Common myeloid progenitor, CD34-positive (primary cell): ENCODE measurements at regions of chr19 and their contacts with region 1.

Region 1: GRCh38 chr19:47745010-47745901 is at the start of gene NOP53:
- DNase-seq: peak; percentile 96 to 99 (median 96)
- H3K4me3 ChIP-seq: peak within 1 kb of the TSS; percentile 76 to 88 (median 82)
- H3K27ac ChIP-seq: peak within 1 kb of the TSS; percentile 92 to 97
- H3K4me1 ChIP-seq: peaks cover 3 to 42% (median 34%) of the 10 kb centered on the region in 4 experiments
- H3K27me3 ChIP-seq: no peaks in the 10 kb centered on the region

Region 2: DNA sequence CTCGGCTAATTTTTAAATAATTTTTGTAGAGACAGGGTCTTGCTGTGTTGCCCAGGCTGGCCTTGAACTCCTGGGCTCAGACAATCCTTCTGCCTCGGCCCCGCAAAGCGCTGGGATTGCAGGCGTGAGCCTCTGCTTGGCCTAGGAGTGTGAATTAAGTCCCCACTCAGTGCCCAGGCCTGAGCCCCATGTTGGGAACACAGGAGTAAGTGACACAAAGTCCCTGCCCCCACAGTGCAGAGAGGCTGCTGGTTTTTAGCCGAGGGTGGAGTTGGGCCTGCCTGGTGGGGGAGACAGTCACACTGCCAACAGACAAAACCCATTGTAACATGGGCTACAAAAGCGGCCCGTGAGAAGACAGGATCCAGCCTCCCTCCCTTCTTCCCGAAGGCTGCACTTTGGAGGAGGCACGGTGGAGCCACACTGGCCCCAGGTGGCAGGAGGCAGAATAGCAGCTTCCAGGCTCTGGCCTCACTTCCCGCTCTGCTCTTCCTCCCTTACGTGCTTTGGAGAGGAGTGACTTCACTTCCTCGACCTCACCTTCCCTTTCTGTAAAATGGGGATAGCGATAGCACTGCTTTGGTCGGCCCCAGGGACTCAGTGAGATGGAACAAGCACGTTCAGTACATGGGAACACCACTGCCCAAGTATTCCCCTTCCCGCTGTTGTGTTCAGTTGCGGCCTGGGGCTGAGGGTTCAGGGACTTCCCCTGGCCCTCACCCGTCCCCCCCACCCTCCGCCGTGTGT is 47.2 kb before region 1 on chr19:
- CTCF ChIA-PET with region 1: interaction called, 321 read pairs
- POLR2A ChIA-PET with region 1: no interaction called
- DNase-seq: peak; percentile 67 to 82 (median 77)
- H3K4me3 ChIP-seq: no peak overlapping the region
- H3K27ac ChIP-seq: no peak overlapping the region
- H3K4me1 ChIP-seq: peaks cover 0 to 7% (median 2%) of the 10 kb centered on the region in 4 experiments
- H3K27me3 ChIP-seq: no peaks in the 10 kb centered on the region

Region 3: GRCh38 chr19:47707135-47707925 is 37.9 kb before region 1 on chr19:
- CTCF ChIA-PET with region 1: interaction called, 321 read pairs
- POLR2A ChIA-PET with region 1: interaction called, 11 read pairs
- DNase-seq: peak; percentile 71 to 91 (median 83)
- H3K4me3 ChIP-seq: no peak overlapping the region
- H3K27ac ChIP-seq: no peak overlapping the region
- H3K4me1 ChIP-seq: peaks cover 0 to 5% (median 2%) of the 10 kb centered on the region in 4 experiments
- H3K27me3 ChIP-seq: no peaks in the 10 kb centered on the region

Region 4: DNA sequence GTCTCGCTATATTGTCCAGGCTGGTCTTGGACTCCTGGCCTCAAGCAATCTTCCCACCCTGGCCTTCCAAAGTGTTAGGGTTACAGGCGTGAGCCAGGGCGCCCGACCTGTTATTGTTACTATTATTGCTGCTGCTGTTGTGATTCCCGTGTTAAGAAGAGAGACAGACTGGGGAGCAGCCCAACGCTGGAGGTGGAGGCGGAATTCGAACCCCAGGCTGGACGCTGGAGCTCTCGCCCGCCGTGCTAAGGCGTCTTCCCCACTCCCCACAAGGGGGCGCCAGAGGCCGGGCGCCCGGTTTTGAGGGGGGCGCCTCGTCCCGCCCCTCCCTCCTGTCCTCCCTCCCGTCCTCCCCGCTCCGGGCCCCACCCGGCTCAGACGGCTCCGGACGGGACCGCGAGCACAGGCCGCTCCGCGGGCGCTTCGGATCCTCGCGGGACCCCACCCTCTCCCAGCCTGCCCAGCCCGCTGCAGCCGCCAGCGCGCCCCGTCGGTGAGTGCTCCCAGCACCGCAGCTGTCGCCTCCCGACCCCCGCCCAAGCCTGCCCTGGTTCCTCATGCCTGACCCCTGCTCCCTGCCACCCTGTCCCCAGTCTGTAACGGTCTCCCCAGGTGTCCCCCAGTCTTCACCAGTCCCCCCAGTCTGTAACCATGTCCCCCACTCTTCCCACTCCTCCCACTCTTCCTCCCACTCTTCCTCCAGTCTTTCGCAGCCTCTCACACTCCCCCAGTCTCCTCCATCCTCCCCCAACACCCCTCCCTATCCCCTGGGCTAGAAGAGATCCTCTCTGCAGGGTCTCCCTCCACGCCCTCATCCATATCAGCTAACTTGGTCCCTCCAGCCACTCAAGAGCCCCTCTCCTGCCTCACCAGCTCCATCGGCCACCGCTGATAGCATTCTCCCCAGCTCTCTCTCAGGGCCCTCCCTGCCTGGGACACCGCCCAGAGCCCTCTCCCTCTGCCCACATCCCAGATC is 31.9 kb before region 1 on chr19 and contains the start of gene EHD2:
- CTCF ChIA-PET with region 1: interaction called, 321 read pairs
- POLR2A ChIA-PET with region 1: interaction called, 11 read pairs
- DNase-seq: peak; percentile 58 to 69 (median 67)
- H3K4me3 ChIP-seq: peak within 1 kb of the TSS; percentile 4 to 93 (median 67)
- H3K27ac ChIP-seq: peak within 1 kb of the TSS in 1 of 2 experiments; percentile 61
- H3K4me1 ChIP-seq: peaks cover 0 to 6% (median 3%) of the 10 kb centered on the region in 4 experiments
- H3K27me3 ChIP-seq: no peaks in the 10 kb centered on the region

Region 5: DNA sequence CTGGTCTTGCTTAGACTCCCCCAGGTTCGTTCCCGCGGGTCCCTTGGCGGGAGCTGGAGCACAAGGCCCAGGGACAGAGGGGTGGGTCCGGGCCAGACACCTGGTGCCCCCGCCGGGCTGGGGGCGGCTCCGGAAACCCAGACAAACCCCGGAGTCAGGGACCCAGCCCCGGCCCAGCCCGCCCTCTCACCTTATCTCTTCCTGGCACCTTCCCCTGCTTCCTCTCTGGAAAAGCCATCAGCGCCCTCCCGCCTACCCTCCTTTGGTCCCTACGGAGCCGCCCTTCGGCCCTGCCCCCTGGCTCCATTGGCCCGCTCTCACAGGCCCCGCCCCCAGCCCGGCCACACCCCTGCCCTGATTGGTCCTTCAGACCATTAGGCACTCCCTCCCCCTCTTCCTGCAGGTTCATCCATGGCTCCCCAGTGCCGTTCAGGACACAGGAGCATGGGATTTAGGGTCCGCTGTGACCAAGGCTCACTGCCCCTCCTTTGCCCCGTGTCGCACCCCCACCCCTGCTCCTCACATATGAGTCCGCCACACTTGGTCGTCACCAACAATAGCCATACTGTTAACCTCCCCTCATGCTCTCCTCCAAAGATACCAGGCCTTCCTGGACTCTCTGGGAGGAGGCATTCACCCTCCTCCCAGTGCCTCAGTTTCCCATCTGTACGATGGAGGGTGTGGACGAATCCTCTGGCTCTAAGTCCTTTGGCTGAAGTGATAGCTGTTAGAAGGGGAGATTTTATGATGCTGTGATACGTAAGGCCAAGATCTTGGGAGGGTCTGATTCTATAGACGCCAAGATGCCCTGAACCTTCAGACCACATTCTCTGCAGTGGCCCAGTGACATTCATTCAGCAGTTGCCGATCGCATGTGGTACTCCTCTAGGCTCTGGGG is 15.0 kb before region 1 on chr19:
- CTCF ChIA-PET with region 1: interaction called, 10 read pairs
- POLR2A ChIA-PET with region 1: interaction called, 5 read pairs
- DNase-seq: peak; percentile 94 to 98 (median 96)
- H3K4me3 ChIP-seq: peak overlapping the region in 6 of 7 experiments; percentile 32 to 73 (median 54)
- H3K27ac ChIP-seq: peak overlapping the region; percentile 72 to 90
- H3K4me1 ChIP-seq: peaks cover 3 to 37% (median 31%) of the 10 kb centered on the region in 4 experiments
- H3K27me3 ChIP-seq: no peaks in the 10 kb centered on the region